ENCODE measurements at regions of chr7 and their contacts with region 1.

Region 1: DNA sequence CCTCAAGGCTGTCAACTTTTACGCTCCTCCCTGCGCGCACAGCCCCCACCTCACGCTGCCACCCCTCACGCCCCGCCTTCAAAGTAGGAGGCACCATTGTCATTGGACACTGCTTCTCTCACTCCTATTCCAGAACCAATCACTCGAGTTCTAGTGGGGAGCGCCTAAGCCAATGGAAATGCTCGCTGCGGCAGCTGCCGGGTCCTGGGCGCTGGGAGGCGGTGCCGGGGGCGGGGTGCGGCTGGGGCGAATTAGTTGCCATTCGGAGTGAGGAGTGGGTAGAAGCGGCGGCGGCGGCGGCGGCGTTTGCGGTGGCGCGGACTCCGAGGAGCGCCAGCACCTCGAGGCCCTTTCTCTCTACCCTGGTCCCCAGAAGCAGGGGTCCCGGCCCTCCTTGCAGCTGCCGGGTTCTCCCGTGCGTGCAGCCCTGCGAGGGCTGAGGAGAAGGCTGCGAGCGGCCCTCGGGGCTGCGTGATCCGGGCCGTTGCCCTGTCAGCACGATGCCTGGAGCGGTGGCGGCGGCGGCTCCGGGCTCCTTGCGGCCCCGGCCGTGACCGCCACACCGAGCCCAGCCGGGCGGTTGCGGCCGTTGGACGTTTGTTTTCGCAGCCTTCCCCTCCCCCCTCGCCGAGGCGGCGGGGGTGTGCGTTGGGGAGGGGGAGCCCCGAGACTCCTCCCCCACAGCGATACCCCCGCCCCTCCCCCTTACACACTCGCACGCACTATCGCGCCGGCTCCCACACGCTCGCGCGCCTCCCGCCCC is at the start of gene GLCCI1:
- DNase-seq: peak; percentile 96
- H3K4me3 ChIP-seq: peak within 1 kb of the TSS; percentile 87 to 100
- H3K27ac ChIP-seq: peak within 1 kb of the TSS; percentile 77 to 99
- H3K4me1 ChIP-seq: peaks cover 8 to 37% of the 10 kb centered on the region in 2 experiments; a peak in 3 of 4 replicates
- H3K27me3 ChIP-seq: no peaks in the 10 kb centered on the region
- CTCF ChIP-seq: no peak
- EP300 ChIP-seq: peak; percentile 34 to 39; a peak in 2 of 4 replicates
- RAD21 ChIP-seq: peak; percentile 13; the same call in 1 of the 2 replicates
- polyA plus RNA-seq, gene GLCCI1: 5.5 and 7.5 TPM in 2 replicates

Region 2: GRCh38 chr7:7640221-7641128 is 328.2 kb before region 1 on chr7 and contains the start of gene UMAD1:
- CTCF ChIA-PET with region 1: interaction called, 3 read pairs
- POLR2A ChIA-PET with region 1: interaction called, 25 read pairs
- DNase-seq: peak; percentile 93
- H3K4me3 ChIP-seq: peak within 1 kb of the TSS; percentile 79 to 85
- H3K27ac ChIP-seq: peak within 1 kb of the TSS; percentile 80 to 96
- H3K4me1 ChIP-seq: peaks cover 0 to 21% of the 10 kb centered on the region in 2 experiments; a peak in 2 of 4 replicates
- H3K27me3 ChIP-seq: no peaks in the 10 kb centered on the region
- CTCF ChIP-seq: no peak
- EP300 ChIP-seq: peak in 1 of 2 experiments; percentile 3; a peak in 1 of 4 replicates
- RAD21 ChIP-seq: no peak
- polyA plus RNA-seq, gene UMAD1: 13.9 and 17.6 TPM in 2 replicates

Region 3: DNA sequence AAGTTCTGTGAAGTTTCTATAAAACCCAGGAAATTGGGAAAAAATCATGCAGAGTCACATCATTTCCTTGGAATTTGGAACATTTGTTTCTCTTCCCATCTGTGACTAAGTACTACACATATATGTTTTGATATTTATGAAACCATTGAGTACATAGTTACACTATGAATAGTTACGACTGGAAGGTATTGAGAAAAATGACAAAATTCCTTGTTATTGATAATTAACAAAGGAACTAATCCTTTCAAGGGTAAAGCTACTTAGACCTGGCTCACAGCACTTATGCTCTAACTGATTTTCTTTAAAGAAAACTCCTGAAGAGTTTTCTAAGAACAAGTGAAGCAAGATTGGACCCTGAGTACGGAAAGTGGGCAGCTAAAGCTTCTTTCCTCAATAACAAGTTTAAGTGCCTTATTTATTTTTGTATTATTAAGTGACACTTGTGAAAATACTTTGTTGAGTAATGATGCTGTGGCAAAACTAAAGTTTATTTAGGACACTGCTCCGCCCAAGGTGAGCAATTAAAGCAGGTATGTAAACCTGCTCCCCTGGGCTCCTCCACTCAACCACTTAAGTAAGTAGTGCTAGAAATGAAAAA is 12.1 kb before region 1 on chr7:
- CTCF ChIA-PET with region 1: interaction called, 20 read pairs
- POLR2A ChIA-PET with region 1: no interaction called
- DNase-seq: no peak
- H3K4me3 ChIP-seq: no peak overlapping the region
- H3K27ac ChIP-seq: peak overlapping the region in 1 of 2 experiments; percentile 49; a peak in 2 of 4 replicates
- H3K4me1 ChIP-seq: peaks cover 0 to 5% of the 10 kb centered on the region in 2 experiments; a peak in 1 of 4 replicates
- H3K27me3 ChIP-seq: no peaks in the 10 kb centered on the region
- CTCF ChIP-seq: no peak
- EP300 ChIP-seq: no peak
- RAD21 ChIP-seq: no peak

Region 4: DNA sequence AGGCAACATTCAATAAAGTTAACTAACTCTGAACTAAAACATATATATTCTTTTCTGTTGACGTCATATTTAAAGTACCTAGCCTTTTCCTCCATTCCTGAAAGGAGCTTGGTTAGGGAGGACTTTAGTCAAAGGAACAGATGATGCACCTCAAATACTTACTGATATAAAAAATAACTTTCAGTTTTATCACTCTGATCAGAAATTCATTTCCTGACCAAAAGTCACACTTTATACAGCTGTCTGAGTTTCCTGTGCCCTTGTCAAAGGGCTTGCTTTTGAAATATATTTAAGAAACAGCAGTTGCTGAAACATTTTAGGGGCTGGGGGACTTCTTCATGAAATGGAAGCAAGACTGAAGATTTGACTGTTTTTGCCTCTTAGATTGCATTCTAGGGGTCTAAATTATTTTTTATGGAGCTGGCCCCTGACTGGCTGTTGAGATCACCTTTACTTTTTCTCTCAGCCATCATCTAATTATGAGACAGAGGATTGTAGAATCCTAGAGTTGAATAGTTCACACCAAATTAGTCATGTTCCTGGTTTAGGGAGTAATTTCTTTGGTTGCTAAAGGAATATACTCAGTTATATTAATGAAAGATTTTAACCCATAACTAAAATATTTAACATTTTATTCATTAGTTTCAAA is 46.5 kb after region 1 on chr7:
- CTCF ChIA-PET with region 1: no interaction called
- POLR2A ChIA-PET with region 1: no interaction called
- DNase-seq: no peak
- H3K4me3 ChIP-seq: no peak overlapping the region
- H3K27ac ChIP-seq: 0 out of 4 replicates have a peak overlapping the region, but pooled peaks of 1 of the 2 experiments have one; percentile 24
- H3K4me1 ChIP-seq: no peaks in the 10 kb centered on the region; a peak in 2 of 4 replicates
- H3K27me3 ChIP-seq: no peaks in the 10 kb centered on the region
- CTCF ChIP-seq: no peak
- EP300 ChIP-seq: no peak
- RAD21 ChIP-seq: no peak

Region 5: DNA sequence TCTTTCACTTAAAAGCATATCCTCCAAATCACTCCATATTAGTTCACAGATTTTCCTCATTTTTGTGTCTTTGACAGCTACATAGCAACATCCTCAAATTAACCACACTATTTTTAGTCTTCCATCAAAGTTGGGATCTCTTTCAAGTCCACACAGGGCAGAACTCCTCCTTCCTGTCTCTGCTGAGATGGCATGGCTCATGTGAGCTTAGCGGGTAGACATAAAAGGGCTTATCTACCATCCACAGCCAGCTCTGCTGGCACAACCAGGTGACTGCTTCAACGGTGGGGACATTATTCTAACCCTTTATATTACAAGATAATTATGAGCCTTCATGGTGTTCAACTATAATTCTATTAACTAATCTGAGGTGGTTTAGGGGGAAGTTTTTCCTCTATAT is 257.8 kb after region 1 on chr7:
- CTCF ChIA-PET with region 1: interaction called, 4 read pairs
- POLR2A ChIA-PET with region 1: interaction called, 12 read pairs
- DNase-seq: no peak
- H3K4me3 ChIP-seq: no peak overlapping the region
- H3K27ac ChIP-seq: peak overlapping the region in 1 of 2 experiments; percentile 100; a peak in 2 of 4 replicates
- H3K4me1 ChIP-seq: peaks cover 0 to 68% of the 10 kb centered on the region in 2 experiments; a peak in 2 of 4 replicates
- H3K27me3 ChIP-seq: no peaks in the 10 kb centered on the region
- CTCF ChIP-seq: no peak
- EP300 ChIP-seq: peak in 1 of 2 experiments; percentile 56; a peak in 2 of 4 replicates
- RAD21 ChIP-seq: no peak

Measured in SK-N-SH (cell line).